HepG2 (cell line): ENCODE measurements at regions of chr6 and their contacts with region 1.

Region 1: DNA sequence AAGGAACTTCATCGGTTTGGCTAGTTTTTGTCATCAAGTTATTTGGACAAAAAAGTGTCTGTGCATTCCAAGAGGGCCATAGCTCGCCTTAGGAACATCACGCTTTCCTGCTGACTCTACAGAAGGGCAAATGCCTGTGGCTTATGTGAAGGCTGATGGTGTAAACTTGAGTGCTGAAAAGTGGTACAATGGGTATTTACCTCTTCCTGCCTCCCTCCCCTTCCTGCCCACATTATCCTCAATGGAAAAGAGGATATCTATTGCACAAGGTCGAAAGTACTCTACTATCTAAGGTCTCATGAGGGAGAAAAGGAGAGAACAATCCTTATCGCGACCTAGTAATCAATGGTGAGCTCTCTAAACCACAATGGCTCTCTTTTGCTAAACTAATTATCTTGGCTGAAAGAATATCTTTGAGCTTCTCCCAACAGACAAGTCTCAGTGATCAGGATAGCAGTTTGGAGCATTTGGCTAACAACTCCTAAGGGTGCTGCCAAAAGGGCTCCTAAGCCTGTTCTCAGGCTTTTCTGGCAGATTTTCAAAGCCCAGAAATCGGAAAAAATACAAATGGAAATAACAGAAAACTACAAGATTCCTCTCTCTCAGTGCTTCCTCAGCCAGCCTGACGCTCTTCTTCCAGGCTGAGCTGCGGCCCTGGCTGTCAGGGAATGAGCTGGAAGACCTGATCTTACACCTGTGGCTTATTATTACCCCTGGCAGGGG is 42.6 kb upstream of the ENPP1 start:
- DNase-seq: peak; percentile 83
- ATAC-seq: peak; percentile 65
- H3K4me3 ChIP-seq: peak overlapping the region in 2 of 3 experiments; percentile 1 to 2; a peak in 1 of 6 replicates
- H3K27ac ChIP-seq: peak overlapping the region; percentile 77
- H3K4me1 ChIP-seq: peaks cover 82% of the 10 kb centered on the region
- H3K27me3 ChIP-seq: no peaks in the 10 kb centered on the region
- CTCF ChIP-seq: no peak
- EP300 ChIP-seq: peak in 1 of 2 experiments; percentile 84; a peak in 2 of 4 replicates
- POLR2A ChIP-seq: no peak
- RAD21 ChIP-seq: no peak

Region 2: DNA sequence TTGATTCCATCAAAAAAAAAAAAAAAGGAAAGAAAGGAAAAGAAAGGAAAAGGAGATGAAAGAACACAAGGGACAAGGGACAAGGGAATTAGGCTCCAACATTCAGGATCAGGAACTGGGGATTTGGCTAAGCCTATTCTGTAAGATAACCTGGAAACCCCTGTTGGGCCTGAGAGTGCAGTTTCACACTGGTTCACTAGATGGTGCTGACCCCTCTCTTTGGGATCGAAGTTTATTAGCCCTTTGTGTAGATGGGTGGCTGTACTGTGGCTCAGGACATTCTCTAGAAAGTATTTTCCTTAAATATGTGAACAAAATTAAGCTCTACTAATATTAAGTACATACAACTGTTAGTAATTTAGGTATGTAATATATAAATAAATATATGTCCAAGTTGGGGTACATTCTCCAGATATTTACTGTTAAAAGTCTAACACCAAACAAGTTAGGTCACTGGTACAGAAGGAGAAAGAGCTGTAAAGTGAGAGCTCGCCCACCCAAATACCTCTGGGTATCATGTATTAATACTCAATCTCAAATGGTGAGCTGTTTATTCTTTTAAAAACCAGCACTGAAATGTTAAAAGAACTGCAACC is 70.3 kb before region 1 on chr6:
- CTCF ChIA-PET with region 1: no interaction called
- POLR2A ChIA-PET with region 1: no interaction called
- in situ Hi-C with region 1: no loop called
- intact Hi-C with region 1: no loop called
- DNase-seq: peak; percentile 77
- ATAC-seq: peak; percentile 100
- H3K4me3 ChIP-seq: no peak overlapping the region
- H3K27ac ChIP-seq: no peak overlapping the region
- H3K4me1 ChIP-seq: no peaks in the 10 kb centered on the region
- H3K27me3 ChIP-seq: no peaks in the 10 kb centered on the region
- CTCF ChIP-seq: peak; percentile 93
- EP300 ChIP-seq: no peak
- POLR2A ChIP-seq: no peak
- RAD21 ChIP-seq: peak; percentile 91

Region 3: GRCh38 chr6:131744432-131745287 is 20.6 kb before region 1 on chr6:
- CTCF ChIA-PET with region 1: no interaction called
- POLR2A ChIA-PET with region 1: no interaction called
- in situ Hi-C with region 1: no loop called
- intact Hi-C with region 1: no loop called
- DNase-seq: no peak
- ATAC-seq: no peak
- H3K4me3 ChIP-seq: no peak overlapping the region
- H3K27ac ChIP-seq: peak overlapping the region; percentile 3
- H3K4me1 ChIP-seq: peaks cover 15% of the 10 kb centered on the region
- H3K27me3 ChIP-seq: no peaks in the 10 kb centered on the region
- CTCF ChIP-seq: no peak
- EP300 ChIP-seq: no peak
- POLR2A ChIP-seq: no peak
- RAD21 ChIP-seq: no peak

Region 4: DNA sequence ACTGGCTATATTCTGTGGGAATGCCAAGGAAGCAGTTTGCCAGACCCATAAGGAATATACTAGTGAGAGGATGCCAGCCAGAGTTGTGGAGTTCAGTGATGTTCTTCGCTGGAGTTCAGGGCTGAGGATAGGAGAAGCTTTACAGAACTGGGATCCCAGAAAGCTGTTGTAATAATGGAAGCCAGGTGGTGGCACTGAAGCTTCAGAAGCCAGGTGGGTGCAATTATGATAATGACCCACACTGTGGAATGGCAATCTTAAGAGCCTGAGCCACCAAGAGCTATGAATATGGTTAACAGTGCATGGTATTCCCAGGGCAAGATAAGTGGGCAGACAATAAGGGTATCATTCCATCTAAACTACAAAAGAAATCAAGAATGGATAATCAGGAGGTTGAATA is 17.5 kb after region 1 on chr6:
- CTCF ChIA-PET with region 1: no interaction called
- POLR2A ChIA-PET with region 1: no interaction called
- in situ Hi-C with region 1: no loop called
- intact Hi-C with region 1: no loop called
- DNase-seq: no peak
- ATAC-seq: peak; percentile 83
- H3K4me3 ChIP-seq: no peak overlapping the region
- H3K27ac ChIP-seq: no peak overlapping the region
- H3K4me1 ChIP-seq: peaks cover 38% of the 10 kb centered on the region
- H3K27me3 ChIP-seq: no peaks in the 10 kb centered on the region
- CTCF ChIP-seq: peak; percentile 64
- EP300 ChIP-seq: no peak
- POLR2A ChIP-seq: no peak
- RAD21 ChIP-seq: no peak

Region 5: GRCh38 chr6:131894735-131895424 is 129.6 kb after region 1 on chr6:
- CTCF ChIA-PET with region 1: no interaction called
- POLR2A ChIA-PET with region 1: interaction called, 5 read pairs
- in situ Hi-C with region 1: no loop called
- intact Hi-C with region 1: loop called (anchors 5 kb)
- DNase-seq: peak; percentile 99
- ATAC-seq: peak; percentile 82
- H3K4me3 ChIP-seq: peak overlapping the region in 2 of 3 experiments; percentile 35 to 57; a peak in 3 of 6 replicates
- H3K27ac ChIP-seq: peak overlapping the region; percentile 97
- H3K4me1 ChIP-seq: peaks cover 68% of the 10 kb centered on the region
- H3K27me3 ChIP-seq: no peaks in the 10 kb centered on the region
- CTCF ChIP-seq: no peak
- EP300 ChIP-seq: peak; percentile 91 to 96; a peak in 3 of 4 replicates
- POLR2A ChIP-seq: peak; percentile 30 to 71; a peak in 3 of 4 replicates
- RAD21 ChIP-seq: peak; percentile 38; the same call in 1 of the 2 replicates